Caco-2 (cell line): ENCODE measurements at regions of chr16 and their contacts with region 1.

Region 1: DNA sequence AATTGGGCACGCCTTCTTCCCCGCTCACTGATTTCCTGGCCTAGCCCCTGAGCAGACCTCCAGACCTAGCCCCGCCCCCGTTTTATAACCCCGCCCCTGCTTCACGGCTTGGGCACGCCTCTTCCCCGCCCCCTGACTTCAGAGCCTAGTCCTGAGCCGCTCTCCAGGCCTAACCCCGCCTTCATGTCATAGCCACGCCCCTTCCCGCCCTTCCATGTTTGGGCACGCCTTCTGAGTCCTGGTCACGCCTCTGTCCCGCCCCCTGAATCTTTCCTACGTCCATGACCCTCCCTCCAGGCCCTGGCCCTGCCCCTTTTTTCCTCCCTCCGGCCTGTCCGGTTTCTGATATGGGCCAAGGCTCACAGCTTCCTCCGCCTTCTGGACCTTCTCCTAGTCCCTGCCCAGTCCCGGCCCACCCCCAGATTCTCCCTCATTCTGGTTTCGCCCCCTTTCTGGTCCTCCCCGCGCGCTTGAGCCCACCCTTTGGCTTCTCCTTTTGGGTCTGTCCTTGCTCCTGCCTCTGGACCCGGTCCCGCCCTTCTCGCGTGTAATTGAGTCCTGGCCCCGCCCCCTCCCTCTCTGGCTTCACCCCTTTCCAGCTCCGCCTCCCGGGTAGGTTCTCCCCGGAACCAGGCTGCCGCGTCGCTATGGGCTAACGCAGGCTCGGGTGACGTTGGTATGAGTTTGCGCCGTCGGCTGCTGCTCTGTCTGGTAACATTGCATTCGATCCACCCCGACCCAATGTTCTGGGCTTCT is 15.1 kb upstream of the EEF2K start:
- DNase-seq: peak; percentile 98 to 99
- H3K4me3 ChIP-seq: peak overlapping the region; percentile 45
- H3K4me3 Mint-ChIP-seq: peak overlapping the region; percentile 97
- H3K27ac Mint-ChIP-seq: peak overlapping the region; percentile 98
- H3K4me1 ChIP-seq: peaks cover 8% of the 10 kb centered on the region; the same call in 1 of the 2 replicates
- H3K4me1 Mint-ChIP-seq: peaks cover 7% of the 10 kb centered on the region
- H3K27me3 ChIP-seq: no peaks in the 10 kb centered on the region
- H3K27me3 Mint-ChIP-seq: peaks cover 3% of the 10 kb centered on the region
- CTCF ChIP-seq: no peak

Region 2: GRCh38 chr16:22001591-22001990 is 189.4 kb before region 1 on chr16:
- CTCF ChIA-PET with region 1: interaction called, 4 read pairs
- POLR2A ChIA-PET with region 1: no interaction called
- intact Hi-C with region 1: loop called (anchors 1 kb)
- DNase-seq: no peak
- H3K4me3 ChIP-seq: no peak overlapping the region
- H3K4me3 Mint-ChIP-seq: peak overlapping the region; percentile 20
- H3K27ac Mint-ChIP-seq: no peak overlapping the region
- H3K4me1 ChIP-seq: peaks cover 17% of the 10 kb centered on the region
- H3K4me1 Mint-ChIP-seq: peaks cover 19% of the 10 kb centered on the region
- H3K27me3 ChIP-seq: no peaks in the 10 kb centered on the region
- H3K27me3 Mint-ChIP-seq: no peaks in the 10 kb centered on the region
- CTCF ChIP-seq: no peak

Region 3: DNA sequence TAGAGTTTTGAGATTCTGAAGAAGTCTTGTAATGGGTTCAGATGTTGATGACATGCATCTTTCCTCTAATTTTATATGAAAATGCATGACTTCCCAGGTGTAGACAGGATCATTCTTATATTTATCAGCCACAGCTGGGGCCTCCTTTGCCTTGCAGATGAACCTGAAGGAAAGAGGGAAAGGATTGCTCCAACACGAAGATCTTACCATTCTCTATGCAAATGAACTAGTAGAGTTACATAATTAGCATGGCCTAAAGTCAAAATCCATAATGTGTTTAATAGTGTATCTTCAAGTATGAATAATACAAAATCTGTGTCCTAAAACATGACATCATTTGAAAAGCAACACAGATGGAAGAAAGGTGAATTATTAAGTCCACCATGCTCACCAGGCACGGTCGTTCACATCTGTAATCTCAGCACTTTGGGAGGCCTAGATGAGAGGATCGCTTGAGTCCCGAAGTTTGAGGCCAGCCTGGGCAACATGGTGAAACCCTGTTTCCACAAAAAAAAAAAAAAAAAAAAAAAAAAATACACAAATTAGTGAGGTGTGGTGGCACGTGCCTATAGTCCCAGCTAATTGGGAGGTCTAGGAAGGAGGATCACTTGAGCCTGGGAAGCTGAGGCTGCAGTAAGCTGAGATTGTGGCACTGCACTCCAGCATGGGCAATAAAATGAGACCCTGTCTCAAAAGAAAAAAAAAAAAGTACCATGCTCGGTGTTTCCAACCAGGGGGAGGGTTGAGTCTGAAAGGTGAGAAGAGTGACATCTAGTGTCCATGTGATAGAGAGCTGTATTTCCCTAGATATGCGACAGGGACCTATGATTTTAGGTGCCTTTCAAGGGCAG is 92.3 kb before region 1 on chr16:
- CTCF ChIA-PET with region 1: interaction called, 18 read pairs
- POLR2A ChIA-PET with region 1: no interaction called
- intact Hi-C with region 1: loop called (anchors 1 kb)
- DNase-seq: peak in 1 of 2 experiments; percentile 61
- H3K4me3 ChIP-seq: no peak overlapping the region
- H3K4me3 Mint-ChIP-seq: peak overlapping the region; percentile 42
- H3K27ac Mint-ChIP-seq: no peak overlapping the region
- H3K4me1 ChIP-seq: no peaks in the 10 kb centered on the region
- H3K4me1 Mint-ChIP-seq: no peaks in the 10 kb centered on the region
- H3K27me3 ChIP-seq: no peaks in the 10 kb centered on the region
- H3K27me3 Mint-ChIP-seq: peaks cover 3% of the 10 kb centered on the region
- CTCF ChIP-seq: peak; percentile 50 to 77

Region 4: GRCh38 chr16:22141746-22142145 is 49.2 kb before region 1 on chr16:
- CTCF ChIA-PET with region 1: interaction called, 17 read pairs
- POLR2A ChIA-PET with region 1: no interaction called
- intact Hi-C with region 1: loop called (anchors 5 kb)
- DNase-seq: peak in 1 of 2 experiments; percentile 6
- H3K4me3 ChIP-seq: no peak overlapping the region
- H3K4me3 Mint-ChIP-seq: no peak overlapping the region
- H3K27ac Mint-ChIP-seq: no peak overlapping the region
- H3K4me1 ChIP-seq: no peaks in the 10 kb centered on the region
- H3K4me1 Mint-ChIP-seq: no peaks in the 10 kb centered on the region
- H3K27me3 ChIP-seq: no peaks in the 10 kb centered on the region; the same call in 1 of the 2 replicates
- H3K27me3 Mint-ChIP-seq: peaks cover 2% of the 10 kb centered on the region
- CTCF ChIP-seq: peak; percentile 52 to 68

Region 5: DNA sequence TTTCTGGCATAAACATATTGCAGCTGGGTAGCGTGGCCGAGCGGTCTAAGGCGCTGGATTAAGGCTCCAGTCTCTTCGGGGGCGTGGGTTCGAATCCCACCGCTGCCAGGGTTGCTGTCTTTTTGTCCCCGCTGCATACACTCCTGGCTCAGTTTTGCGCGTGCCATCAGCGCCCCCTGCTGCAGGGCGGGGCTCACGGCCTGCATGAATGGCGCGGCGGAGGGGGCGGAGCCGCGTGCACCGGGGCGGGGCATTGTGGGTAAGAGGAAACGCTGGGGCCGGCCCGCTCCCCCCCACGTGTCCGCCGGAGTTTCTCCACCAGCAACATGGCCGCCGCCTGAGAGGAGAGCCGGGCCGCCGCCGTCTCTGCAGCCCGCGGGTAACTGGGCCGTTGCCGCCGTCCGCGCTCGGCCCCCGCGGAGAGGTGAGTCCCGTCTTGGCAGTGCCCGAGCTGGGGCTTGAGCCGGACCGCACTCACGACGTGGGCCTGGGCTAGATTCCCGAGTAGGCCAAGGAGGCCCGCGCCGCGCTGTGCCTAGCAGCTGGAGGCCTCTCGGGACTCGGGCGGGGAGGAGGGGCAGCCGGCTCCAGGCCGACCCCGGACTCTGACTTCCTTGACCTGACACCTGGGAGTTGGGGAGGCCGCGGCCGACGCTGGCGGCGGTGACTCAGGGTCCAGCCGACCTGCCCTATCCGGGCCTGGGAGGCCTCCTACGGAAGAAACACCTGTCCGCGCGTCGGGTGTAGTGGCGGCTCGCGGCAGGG is 106.3 kb after region 1 on chr16 and contains the start of gene POLR3E:
- CTCF ChIA-PET with region 1: interaction called, 4 read pairs
- POLR2A ChIA-PET with region 1: no interaction called
- intact Hi-C with region 1: loop called (anchors 1 kb)
- DNase-seq: peak; percentile 96 to 99
- H3K4me3 ChIP-seq: peak within 1 kb of the TSS; percentile 77
- H3K4me3 Mint-ChIP-seq: peak within 1 kb of the TSS; percentile 82
- H3K27ac Mint-ChIP-seq: peak within 1 kb of the TSS; percentile 83
- H3K4me1 ChIP-seq: peaks cover 5% of the 10 kb centered on the region
- H3K4me1 Mint-ChIP-seq: peaks cover 13% of the 10 kb centered on the region
- H3K27me3 ChIP-seq: no peaks in the 10 kb centered on the region
- H3K27me3 Mint-ChIP-seq: no peaks in the 10 kb centered on the region
- CTCF ChIP-seq: peak; percentile 85 to 88
- total RNA-seq, gene POLR3E: 68.7 and 70.8 TPM in 2 replicates